ENCODE measurements at regions of chr2 and their contacts with region 1.

Region 1: GRCh38 chr2:61176755-61177726 is 15.1 kb downstream of the C2orf74 start:
- DNase-seq: peak; percentile 69
- ATAC-seq: peak; percentile 93
- H3K4me3 ChIP-seq: peak overlapping the region; percentile 70 to 81
- H3K27ac ChIP-seq: peak overlapping the region; percentile 79
- H3K4me1 ChIP-seq: peaks cover 7 to 22% of the 10 kb centered on the region in 2 experiments
- H3K27me3 ChIP-seq: no peaks in the 10 kb centered on the region
- CTCF ChIP-seq: no peak
- POLR2A ChIP-seq: peak; percentile 83
- RAD21 ChIP-seq: peak; percentile 23; the same call in 1 of the 2 replicates

Region 2: GRCh38 chr2:61065715-61066709 is 111.0 kb before region 1 on chr2 and contains the start of gene SANBR:
- CTCF ChIA-PET with region 1: no interaction called
- POLR2A ChIA-PET with region 1: no interaction called
- RAD21 ChIA-PET with region 1: interaction called in 1 of 2 experiments, 3 read pairs
- intact Hi-C with region 1: loop called (anchors 2 kb)
- DNase-seq: peak; percentile 75
- ATAC-seq: peak; percentile 96
- H3K4me3 ChIP-seq: peak within 1 kb of the TSS; percentile 58 to 70
- H3K27ac ChIP-seq: peak within 1 kb of the TSS; percentile 72
- H3K4me1 ChIP-seq: peaks cover 6 to 16% of the 10 kb centered on the region in 2 experiments; a peak in 3 of 4 replicates
- H3K27me3 ChIP-seq: no peaks in the 10 kb centered on the region
- CTCF ChIP-seq: no peak
- POLR2A ChIP-seq: peak; percentile 37
- RAD21 ChIP-seq: no peak
- total RNA-seq, gene SANBR: 4.6 TPM